ENCODE measurements at regions of chr6 and their contacts with region 1.

Region 1: DNA sequence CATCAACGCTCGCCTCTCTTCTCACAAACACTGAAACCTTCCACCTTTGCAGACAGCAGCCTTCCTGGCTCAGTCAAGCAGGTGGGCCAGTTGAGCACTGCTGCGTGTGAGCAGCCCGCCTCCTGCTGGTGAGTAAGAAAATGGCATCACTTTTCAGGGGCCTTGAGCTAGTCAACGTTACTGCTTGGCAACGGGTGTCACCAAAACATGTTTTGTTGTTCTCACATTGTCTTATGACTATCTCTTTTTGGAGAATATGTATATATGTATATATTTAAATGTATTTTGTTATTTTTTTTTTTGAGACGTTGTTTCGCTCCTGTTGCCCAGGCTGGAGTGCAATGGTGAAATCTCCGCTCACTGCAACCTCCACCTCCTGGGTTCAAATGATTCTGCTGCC is 97.0 kb upstream of the AGPAT4 start:
- DNase-seq: peak; percentile 75
- ATAC-seq: peak; percentile 58
- H3K4me3 ChIP-seq: no peak overlapping the region
- H3K27ac ChIP-seq: 0 out of 2 replicates have a peak overlapping the region, but pooled peaks have one; percentile 28
- H3K4me1 ChIP-seq: peaks cover 21% of the 10 kb centered on the region
- H3K27me3 ChIP-seq: no peaks in the 10 kb centered on the region
- CTCF ChIP-seq: peak; percentile 84

Region 2: DNA sequence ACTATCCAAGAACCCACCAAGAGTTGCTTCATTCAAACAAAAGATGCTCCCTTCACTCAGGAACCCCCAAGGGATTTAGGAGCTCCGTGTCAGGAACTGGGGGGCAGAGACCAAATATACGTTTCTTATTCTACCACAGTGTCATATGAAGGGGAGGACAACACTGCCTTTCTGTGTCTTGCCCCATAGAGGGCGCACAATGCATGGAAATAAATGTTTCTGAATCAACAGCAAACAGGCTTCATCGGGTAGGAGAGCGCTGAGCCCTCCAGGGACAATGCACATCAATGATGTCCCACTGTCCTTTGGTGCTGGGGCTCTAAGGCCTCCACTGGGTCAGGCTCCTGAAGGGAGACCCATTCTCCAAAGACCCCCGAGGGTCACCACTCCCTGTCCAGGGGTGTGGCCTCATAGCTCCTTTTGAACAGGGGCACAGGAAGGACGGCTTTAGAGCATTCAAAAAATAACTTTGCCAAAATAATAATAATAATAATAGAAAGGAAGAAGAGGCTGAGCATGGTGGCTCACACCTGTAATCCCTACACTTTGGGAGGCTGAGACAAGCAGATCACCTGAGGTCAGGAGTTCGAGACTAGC is 637.7 kb before region 1 on chr6:
- CTCF ChIA-PET with region 1: no interaction called
- POLR2A ChIA-PET with region 1: interaction called, 3 read pairs
- intact Hi-C with region 1: loop called (anchors 1 kb)
- DNase-seq: peak; percentile 68
- ATAC-seq: peak; percentile 77
- H3K4me3 ChIP-seq: no peak overlapping the region
- H3K27ac ChIP-seq: no peak overlapping the region
- H3K4me1 ChIP-seq: peaks cover 6% of the 10 kb centered on the region; the same call in 1 of the 2 replicates
- H3K27me3 ChIP-seq: no peaks in the 10 kb centered on the region
- CTCF ChIP-seq: peak; percentile 76

Region 3: GRCh38 chr6:160930547-160931377 is 440.1 kb before region 1 on chr6:
- CTCF ChIA-PET with region 1: interaction called, 6 read pairs
- POLR2A ChIA-PET with region 1: no interaction called
- intact Hi-C with region 1: loop called (anchors 1 kb)
- DNase-seq: peak; percentile 74
- ATAC-seq: peak; percentile 90
- H3K4me3 ChIP-seq: peak overlapping the region; percentile 75
- H3K27ac ChIP-seq: peak overlapping the region; percentile 48
- H3K4me1 ChIP-seq: peaks cover 12% of the 10 kb centered on the region
- H3K27me3 ChIP-seq: no peaks in the 10 kb centered on the region
- CTCF ChIP-seq: peak; percentile 78

Region 4: GRCh38 chr6:161152907-161153662 is 217.8 kb before region 1 on chr6:
- CTCF ChIA-PET with region 1: no interaction called
- POLR2A ChIA-PET with region 1: no interaction called
- intact Hi-C with region 1: loop called (anchors 2 kb)
- DNase-seq: no peak
- ATAC-seq: peak; percentile 67
- H3K4me3 ChIP-seq: no peak overlapping the region
- H3K27ac ChIP-seq: no peak overlapping the region
- H3K4me1 ChIP-seq: no peaks in the 10 kb centered on the region
- H3K27me3 ChIP-seq: no peaks in the 10 kb centered on the region
- CTCF ChIP-seq: peak; percentile 70

Region 5: DNA sequence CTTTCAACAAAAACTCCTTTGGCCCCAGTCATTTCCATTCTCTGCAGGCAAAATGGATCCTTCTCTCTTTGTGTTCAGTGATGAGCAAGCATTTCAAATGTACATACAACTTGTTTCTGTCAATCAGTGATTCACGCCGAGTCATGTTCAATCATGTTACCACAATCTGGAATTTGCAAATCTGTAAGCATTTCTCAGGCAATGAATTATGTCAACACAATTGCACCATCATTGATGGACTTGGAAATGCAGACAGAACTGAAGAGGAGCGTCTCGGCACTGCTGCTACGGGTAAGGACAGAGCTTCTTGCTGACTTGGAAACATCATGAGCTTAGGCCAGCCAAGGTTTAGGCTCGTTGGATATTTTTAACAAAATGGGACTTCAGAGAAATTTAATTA is 35.8 kb after region 1 on chr6:
- CTCF ChIA-PET with region 1: no interaction called
- POLR2A ChIA-PET with region 1: no interaction called
- intact Hi-C with region 1: no loop called
- DNase-seq: peak; percentile 90
- ATAC-seq: peak; percentile 31; the same call in 1 of the 2 replicates
- H3K4me3 ChIP-seq: no peak overlapping the region
- H3K27ac ChIP-seq: peak overlapping the region; percentile 70
- H3K4me1 ChIP-seq: peaks cover 20% of the 10 kb centered on the region
- H3K27me3 ChIP-seq: no peaks in the 10 kb centered on the region
- CTCF ChIP-seq: no peak